ENCODE measurements at regions of chr17 and their contacts with region 1.

Region 1: DNA sequence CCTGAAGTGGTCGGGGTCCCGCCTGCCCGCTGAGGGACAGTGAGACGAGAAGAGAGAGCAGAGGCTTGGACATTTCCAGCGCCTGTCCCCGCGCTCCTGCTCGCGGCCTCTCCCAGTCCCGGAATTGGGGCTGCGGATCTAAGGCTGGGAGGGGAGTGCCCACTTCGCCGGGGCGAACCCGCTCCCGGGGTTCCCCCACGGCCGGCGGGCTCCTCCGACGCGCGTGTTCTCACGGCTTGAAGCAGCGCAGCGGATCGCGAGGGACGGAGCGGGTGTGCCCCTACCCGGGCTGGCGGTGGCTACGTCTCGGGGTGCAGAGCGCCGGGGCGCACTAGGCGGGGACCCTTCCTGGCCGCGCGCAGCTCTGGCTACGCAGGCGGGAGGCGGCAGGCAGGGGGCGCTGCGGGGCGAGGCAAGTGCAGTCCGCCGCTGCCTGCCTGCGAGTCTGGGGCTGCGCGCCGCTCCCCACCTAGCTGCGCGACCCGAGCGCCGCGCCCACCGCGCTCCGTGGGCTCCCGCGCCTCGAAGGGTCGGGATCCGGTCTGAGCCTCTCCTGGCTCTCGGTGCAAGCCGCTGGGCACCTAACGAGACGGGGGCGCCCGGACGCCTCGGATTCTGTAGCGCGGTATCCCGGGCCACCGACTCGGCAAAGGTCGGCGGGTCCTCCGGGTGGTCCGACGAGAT is 1.2 kb downstream of the NGFR start:
- DNase-seq: peak; percentile 89
- H3K4me3 ChIP-seq: peak overlapping the region; percentile 40 to 58 (median 50)
- H3K27ac ChIP-seq: peak overlapping the region in 1 of 4 donors; percentile 68
- H3K4me1 ChIP-seq: peaks cover 4 to 38% (median 37%) of the 10 kb centered on the region in 4 donors
- H3K27me3 ChIP-seq: peaks cover 2 to 21% (median 8%) of the 10 kb centered on the region in 3 donors
- CTCF ChIP-seq: peak; percentile 62 to 95 (median 72)
- EP300 ChIP-seq: no peak
- POLR2A ChIP-seq: no peak

Region 2: GRCh38 chr17:49299996-49300395 is 196.3 kb before region 1 on chr17:
- intact Hi-C with region 1: no loop called
- DNase-seq: no peak
- H3K4me3 ChIP-seq: no peak overlapping the region
- H3K27ac ChIP-seq: no peak overlapping the region
- H3K4me1 ChIP-seq: no peaks in the 10 kb centered on the region
- H3K27me3 ChIP-seq: no peaks in the 10 kb centered on the region
- CTCF ChIP-seq: no peak
- EP300 ChIP-seq: no peak
- POLR2A ChIP-seq: no peak

Region 3: DNA sequence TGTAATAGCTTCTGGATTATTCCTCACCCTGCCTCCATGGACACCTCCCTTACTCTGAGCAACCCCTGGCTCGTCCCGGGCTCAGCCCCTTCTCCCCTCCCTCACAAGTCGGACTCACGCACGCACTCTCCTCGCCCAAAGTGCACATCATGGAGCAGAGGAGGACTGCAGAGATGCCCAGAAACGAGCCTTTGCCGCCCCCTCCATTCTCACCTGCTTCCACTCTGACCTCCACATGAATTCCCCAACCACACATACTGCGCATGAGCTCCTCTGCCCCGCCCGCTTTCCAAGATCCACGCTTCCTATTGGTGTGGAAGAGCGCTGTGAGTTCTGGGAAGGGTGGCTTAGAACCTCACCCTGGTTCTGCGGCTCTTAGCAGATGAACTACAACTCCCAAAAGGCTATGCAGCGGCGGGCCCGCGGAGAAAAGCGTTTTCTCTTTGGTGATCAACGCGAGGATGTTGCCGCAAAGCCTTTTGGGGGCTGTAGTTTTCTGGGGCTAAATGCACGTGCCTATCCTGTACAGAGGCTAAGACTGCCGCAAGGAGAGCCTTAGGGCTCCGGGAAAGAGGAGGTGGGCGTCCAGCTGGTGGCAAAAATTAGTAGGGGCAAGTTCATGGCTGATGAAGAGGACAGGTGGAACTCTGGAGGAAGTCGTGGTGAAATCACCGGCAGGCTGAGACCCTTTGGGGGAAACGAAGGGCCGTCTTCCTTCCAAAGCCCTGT is 81.5 kb before region 1 on chr17 and contains the start of gene PHB1:
- intact Hi-C with region 1: loop called (anchors 5 kb)
- DNase-seq: peak; percentile 98
- H3K4me3 ChIP-seq: peak within 1 kb of the TSS; percentile 63 to 94 (median 78)
- H3K27ac ChIP-seq: peak within 1 kb of the TSS; percentile 62 to 71 (median 68)
- H3K4me1 ChIP-seq: peaks cover 0 to 20% (median 16%) of the 10 kb centered on the region in 4 donors
- H3K27me3 ChIP-seq: no peaks in the 10 kb centered on the region
- CTCF ChIP-seq: no peak
- EP300 ChIP-seq: no peak
- POLR2A ChIP-seq: no peak
- total RNA-seq, gene PHB1: 70.9 to 105 (median 94.4) TPM

Region 4: DNA sequence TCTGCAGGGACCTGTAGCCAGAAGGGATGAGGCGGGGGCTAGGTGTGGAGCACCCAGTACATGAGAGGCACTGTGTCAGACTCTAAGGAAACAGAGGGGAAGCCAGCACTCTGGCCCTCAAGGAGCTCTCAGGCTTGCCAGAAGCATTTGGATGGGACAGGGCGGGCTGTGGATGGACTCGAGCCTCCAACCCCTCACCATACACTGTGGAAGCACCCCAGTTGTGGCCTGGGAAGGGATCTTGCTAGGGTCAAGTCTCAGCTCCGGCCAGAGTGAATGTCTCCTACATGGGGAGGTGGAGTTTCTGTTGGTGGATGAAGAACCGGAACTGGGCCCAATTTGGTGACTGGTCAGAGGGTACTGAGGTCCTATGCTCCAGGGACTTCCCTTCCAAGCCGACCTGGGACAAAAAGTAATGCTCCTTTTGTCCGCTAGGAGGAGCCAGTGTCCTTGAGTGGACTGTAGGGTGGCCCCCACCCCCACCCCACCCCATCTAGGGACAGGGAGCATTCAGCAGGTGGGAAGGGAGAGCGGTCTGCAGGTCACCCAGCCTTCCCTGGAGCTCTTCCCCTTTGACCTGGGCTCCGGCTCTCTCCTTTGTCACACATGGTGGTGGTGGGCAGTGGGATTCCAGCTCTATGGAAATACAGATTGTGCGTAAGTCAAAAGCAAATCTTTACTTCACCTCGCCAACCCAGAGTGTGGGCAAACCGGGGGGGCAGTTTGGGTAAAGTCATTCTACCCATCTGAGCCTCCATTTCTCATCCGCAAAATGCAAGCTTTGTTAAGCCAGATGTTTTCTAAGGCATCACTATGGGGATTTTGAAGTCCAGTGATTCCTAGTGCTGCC is 61.3 kb before region 1 on chr17:
- intact Hi-C with region 1: loop called (anchors 1 kb)
- DNase-seq: no peak
- H3K4me3 ChIP-seq: no peak overlapping the region
- H3K27ac ChIP-seq: no peak overlapping the region
- H3K4me1 ChIP-seq: peaks cover 0 to 5% (median 0%) of the 10 kb centered on the region in 4 donors
- H3K27me3 ChIP-seq: peaks cover 8 to 19% (median 19%) of the 10 kb centered on the region in 3 donors
- CTCF ChIP-seq: peak in 3 of 4 experiments; percentile 47 to 73 (median 61)
- EP300 ChIP-seq: no peak
- POLR2A ChIP-seq: no peak

Region 5: GRCh38 chr17:49445591-49445990 is 50.7 kb before region 1 on chr17:
- intact Hi-C with region 1: no loop called
- DNase-seq: peak; percentile 37
- H3K4me3 ChIP-seq: no peak overlapping the region
- H3K27ac ChIP-seq: no peak overlapping the region
- H3K4me1 ChIP-seq: no peaks in the 10 kb centered on the region
- H3K27me3 ChIP-seq: peaks cover 0 to 13% (median 1%) of the 10 kb centered on the region in 3 donors
- CTCF ChIP-seq: no peak
- EP300 ChIP-seq: no peak
- POLR2A ChIP-seq: no peak

Region 6: DNA sequence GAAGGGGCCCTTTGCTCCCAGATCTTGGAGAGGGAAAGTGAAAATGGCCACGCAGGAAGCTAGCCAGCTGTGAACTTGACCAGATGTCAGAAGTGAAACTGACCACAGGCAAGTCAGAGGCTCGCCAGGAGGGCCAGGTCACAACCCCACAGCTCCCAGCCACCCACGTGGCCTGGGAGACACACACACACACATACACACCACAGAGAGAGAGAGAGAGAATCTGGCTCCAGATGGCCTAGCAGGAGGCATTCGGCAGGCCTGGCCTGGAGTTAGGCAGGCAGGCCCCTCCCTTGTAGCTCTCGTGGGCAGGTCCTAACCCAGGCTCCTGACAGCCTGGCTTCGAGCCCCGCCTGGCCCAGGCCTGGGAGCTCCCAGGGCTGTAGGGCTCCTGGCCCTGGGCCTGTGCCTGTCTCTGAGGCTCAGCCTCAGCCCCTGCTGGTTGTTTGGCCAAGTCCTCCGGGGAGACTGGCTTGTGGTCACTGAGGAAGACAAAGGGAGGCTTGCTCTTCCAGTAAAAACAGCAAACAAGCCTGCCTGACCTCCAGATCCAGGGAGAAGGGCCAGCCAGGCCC is 19.0 kb after region 1 on chr17:
- intact Hi-C with region 1: loop called (anchors 1 kb)
- DNase-seq: peak; percentile 98
- H3K4me3 ChIP-seq: no peak overlapping the region
- H3K27ac ChIP-seq: peak overlapping the region; percentile 78 to 86 (median 82)
- H3K4me1 ChIP-seq: peaks cover 0 to 30% (median 30%) of the 10 kb centered on the region in 4 donors
- H3K27me3 ChIP-seq: no peaks in the 10 kb centered on the region
- CTCF ChIP-seq: peak in 3 of 4 experiments; percentile 37 to 46 (median 45)
- EP300 ChIP-seq: peak in 1 of 4 donors; percentile 55
- POLR2A ChIP-seq: no peak

Region 7: DNA sequence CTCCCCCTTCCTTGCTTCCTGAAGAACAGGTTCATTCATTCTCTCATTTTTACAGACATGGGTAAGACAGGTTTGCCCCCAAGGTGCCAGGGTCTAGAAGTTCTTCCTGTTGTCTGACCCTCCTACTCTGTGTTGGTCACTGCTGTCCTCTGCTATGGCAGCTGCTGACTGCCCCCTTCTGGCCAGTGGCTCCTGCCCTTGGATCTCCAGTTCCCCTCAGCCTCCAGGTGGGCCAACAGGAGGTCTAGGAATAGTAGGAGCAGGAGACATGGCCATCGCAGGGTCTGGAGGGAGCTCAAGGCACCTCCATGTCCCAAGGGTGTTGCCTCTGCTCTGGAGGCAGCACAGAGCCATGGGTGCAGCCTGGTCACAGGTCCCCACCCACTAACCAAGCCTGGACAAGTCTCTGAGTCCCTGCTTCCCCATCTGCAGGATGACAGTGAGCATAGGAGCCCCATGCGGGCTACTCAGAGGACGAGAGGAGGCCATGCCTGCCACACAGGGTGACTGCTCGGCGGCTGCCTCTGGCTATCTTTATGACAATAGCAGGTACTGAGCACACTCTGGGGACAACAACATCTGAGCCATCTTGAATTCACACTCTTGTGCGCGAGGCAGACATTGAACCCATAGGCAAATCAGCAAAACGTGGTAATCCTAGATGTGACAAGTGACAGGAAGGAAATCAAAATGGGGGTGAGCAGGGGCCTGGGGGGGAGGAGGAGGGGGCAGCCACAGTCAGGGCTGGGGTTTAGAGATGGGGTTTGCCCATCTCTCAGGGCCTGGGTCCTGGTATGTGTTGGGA is 52.4 kb after region 1 on chr17:
- intact Hi-C with region 1: loop called (anchors 1 kb)
- DNase-seq: no peak
- H3K4me3 ChIP-seq: no peak overlapping the region
- H3K27ac ChIP-seq: no peak overlapping the region
- H3K4me1 ChIP-seq: peaks cover 0 to 6% (median 0%) of the 10 kb centered on the region in 4 donors
- H3K27me3 ChIP-seq: no peaks in the 10 kb centered on the region
- CTCF ChIP-seq: peak in 3 of 4 experiments; percentile 16 to 56 (median 55)
- EP300 ChIP-seq: no peak
- POLR2A ChIP-seq: no peak

Region 8: DNA sequence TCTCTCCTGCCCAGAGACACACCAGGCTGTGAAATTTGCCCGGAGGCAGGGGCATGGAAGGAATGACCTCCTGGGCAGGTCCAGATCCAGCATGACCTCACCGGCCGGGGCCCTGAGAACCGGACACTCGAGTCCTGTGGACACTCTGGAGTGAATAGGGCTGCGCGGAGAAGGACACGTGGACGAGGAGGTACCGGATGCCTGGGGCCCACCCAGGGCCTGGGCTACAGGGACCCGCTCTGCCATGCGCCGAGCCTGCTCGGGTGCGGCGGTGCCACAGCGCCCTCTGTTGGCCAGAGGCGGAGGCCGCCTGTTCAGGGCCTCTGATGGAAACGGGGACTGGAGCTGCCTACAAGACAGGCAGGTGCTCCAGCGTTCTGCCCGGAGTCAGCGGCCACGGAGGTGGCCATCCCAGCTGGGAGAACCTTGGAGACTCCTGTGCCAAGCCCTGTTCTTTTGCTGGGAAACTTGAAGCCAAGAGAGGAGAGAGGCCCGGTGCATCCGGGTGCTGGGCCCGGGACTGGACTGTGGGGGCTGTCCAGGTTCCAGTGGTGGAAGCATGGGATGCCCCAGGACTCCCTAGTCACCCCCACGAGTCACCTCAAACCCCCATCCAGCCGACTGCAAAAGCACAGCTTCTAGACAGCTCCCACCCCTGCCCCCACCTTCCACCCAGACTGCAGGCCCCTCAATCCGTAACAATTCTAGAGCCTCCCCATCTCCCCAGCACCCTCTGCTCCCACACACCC is 60.1 kb after region 1 on chr17:
- intact Hi-C with region 1: loop called (anchors 1 kb)
- DNase-seq: peak; percentile 88
- H3K4me3 ChIP-seq: no peak overlapping the region
- H3K27ac ChIP-seq: no peak overlapping the region
- H3K4me1 ChIP-seq: peaks cover 0 to 8% (median 7%) of the 10 kb centered on the region in 4 donors
- H3K27me3 ChIP-seq: no peaks in the 10 kb centered on the region
- CTCF ChIP-seq: peak; percentile 91 to 100 (median 94)
- EP300 ChIP-seq: no peak
- POLR2A ChIP-seq: no peak

Region 9: GRCh38 chr17:49694847-49695683 is 198.7 kb after region 1 on chr17:
- intact Hi-C with region 1: loop called (anchors 10 kb)
- DNase-seq: peak; percentile 74
- H3K4me3 ChIP-seq: peak overlapping the region in 2 of 4 donors; percentile 8 to 15
- H3K27ac ChIP-seq: peak overlapping the region in 3 of 4 donors; percentile 94 to 97 (median 95)
- H3K4me1 ChIP-seq: peaks cover 0 to 46% (median 39%) of the 10 kb centered on the region in 4 donors
- H3K27me3 ChIP-seq: no peaks in the 10 kb centered on the region
- CTCF ChIP-seq: peak; percentile 90 to 98 (median 94)
- EP300 ChIP-seq: no peak
- POLR2A ChIP-seq: no peak

Region 10: DNA sequence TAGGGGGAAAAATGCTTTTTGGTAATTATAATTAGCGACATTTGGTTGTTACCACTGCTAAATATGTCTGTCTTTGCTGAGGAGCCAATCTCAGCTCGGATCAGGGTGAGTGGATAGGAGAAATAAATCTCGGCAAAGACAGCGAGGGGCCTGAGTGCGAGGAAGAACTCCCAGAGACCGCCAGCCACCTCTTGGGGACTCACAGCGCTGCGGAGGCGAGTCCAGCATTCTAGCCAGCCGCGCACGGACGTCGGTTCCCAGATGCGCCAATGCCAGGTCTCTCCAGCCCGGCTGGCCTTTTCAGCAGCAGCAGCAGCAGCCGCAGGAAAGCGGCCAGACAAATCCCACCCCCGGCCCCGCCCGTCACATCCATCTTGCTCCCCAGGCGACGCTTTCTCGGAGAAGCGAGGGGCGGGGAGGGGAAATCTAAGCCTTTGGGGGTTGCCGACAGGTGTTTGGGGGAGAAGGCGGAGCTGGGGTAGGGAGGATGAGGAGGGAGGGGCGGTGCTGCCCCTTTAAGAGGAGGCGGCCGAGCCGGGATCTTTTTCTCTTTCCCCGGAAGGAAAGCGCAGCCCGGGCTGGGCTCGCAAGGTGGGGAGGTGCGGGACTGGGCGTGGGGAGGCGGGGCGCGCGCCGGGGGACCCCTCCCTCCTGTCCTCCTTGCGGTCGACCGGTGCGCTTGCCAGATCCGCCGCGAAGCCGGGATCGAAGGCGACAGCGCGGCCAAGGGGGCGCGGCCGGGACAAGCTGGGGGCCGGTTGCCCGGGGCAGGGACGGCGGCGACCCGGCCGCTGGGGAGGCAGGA is 559.3 kb after region 1 on chr17 and contains the start of gene ITGA3:
- intact Hi-C with region 1: no loop called
- DNase-seq: peak; percentile 94
- H3K4me3 ChIP-seq: peak within 1 kb of the TSS; percentile 63 to 89 (median 80)
- H3K27ac ChIP-seq: peak within 1 kb of the TSS; percentile 91 to 96 (median 94)
- H3K4me1 ChIP-seq: peaks cover 0 to 64% (median 52%) of the 10 kb centered on the region in 4 donors
- H3K27me3 ChIP-seq: no peaks in the 10 kb centered on the region
- CTCF ChIP-seq: no peak
- EP300 ChIP-seq: no peak
- POLR2A ChIP-seq: peak in 1 of 2 donors; percentile 25
- total RNA-seq, gene ITGA3: 19.9 to 54.0 (median 39.5) TPM

Measured in sigmoid colon (tissue), 7 donors.